GM10248 (cell line): ENCODE measurements at regions of chr12 and their contacts with region 1.

Region 1: DNA sequence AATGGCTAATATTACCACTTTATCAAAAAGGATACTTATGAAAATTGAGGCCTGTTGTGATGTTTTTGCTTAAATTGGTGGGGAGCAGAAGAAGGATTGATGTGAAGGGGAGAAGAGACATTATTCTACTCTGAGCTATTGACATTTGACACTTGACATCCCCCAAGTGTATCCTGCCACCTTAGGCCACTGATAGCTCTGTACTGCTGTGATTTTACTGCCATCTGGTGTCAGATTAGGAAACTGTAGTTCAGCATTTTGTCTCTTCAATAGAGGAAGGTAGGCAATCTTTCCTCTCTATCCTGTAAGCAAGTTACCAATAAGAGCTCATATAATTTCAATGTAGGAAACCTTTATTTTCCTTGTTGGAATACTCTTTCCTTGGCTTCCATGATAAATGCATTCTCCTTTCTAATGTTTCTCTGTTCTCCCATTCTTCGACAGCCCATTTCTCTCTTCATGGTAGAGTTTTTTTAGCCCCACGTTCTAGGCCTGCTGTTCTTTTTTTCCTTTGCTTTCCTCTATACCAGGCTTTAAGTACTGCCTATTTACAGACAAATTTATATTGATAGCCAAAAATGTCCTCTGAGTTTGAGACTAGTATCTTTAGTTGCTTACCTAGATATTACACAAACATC is 46.3 kb downstream of the PPHLN1 start:
- DNase-seq: peak; percentile 46
- CTCF ChIP-seq: peak; percentile 75

Region 2: GRCh38 chr12:41277116-41277945 is 1094.9 kb before region 1 on chr12:
- CTCF ChIA-PET with region 1: interaction called, 17 read pairs
- POLR2A ChIA-PET with region 1: no interaction called
- DNase-seq: peak; percentile 18
- CTCF ChIP-seq: peak; percentile 52

Region 3: DNA sequence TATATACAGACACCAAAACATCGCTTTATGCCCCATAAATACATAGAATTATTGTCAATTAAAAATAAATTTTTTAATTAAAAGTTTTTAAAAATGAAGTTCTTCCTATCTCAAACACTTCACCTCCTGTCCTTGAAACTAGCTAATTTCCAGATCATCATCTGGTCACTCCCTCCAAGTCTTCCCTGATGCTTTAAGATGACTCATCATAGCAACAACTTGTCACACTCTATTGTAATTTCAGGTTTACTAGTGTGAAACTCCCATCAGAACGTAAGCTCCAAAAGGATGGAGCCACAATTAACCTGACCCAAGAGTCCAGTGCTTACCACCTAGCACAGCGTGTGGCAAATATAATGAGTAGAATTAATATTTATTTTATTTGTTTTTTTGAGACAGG is 243.9 kb before region 1 on chr12:
- CTCF ChIA-PET with region 1: interaction called, 12 read pairs
- POLR2A ChIA-PET with region 1: no interaction called
- DNase-seq: no peak
- CTCF ChIP-seq: no peak

Region 4: GRCh38 chr12:42338280-42338679 is 34.0 kb before region 1 on chr12:
- CTCF ChIA-PET with region 1: interaction called, 17 read pairs
- POLR2A ChIA-PET with region 1: no interaction called
- DNase-seq: no peak
- CTCF ChIP-seq: no peak

Region 5: GRCh38 chr12:42360747-42361403 is 11.4 kb before region 1 on chr12:
- CTCF ChIA-PET with region 1: interaction called, 30 read pairs
- POLR2A ChIA-PET with region 1: no interaction called
- DNase-seq: peak; percentile 22
- CTCF ChIP-seq: no peak